ENCODE measurements at regions of chr9 and their contacts with region 1.

Region 1: DNA sequence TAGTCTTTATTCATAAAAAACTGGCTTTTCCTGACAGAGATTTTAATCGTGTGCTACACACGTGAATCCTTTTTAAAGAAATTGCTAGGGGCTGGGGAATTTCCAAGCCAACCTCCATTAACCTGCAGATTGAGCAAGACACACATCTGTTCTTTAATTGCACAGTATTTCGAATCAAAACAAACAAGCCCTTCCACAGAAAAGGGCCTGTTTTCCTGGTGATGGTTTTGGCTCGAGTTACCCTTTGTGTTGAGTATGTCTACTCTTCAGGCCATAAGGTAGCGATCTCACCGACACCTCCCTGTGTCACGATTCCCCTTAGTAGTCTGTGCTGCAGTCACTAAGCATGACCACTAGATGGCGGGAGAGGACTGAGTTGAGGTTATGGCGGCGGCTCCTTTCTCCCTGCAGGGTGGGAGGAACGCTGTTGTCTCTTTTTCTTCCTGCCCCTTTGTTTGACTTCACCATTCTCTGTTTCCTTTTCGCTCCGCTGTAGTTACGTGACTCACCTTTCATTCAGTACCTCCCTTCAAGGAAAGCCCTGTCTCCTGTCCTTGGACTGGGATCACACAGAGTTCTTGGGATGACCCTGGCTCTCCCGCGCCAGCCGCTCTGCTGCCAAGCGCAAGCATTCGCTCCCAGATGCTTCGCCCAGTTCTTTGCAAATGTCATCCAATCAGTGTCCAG is 137.1 kb upstream of the SLC24A2 start:
- DNase-seq: peak; percentile 80
- ATAC-seq: peak; percentile 94

Region 2: GRCh38 chr9:19471737-19472648 is 454.0 kb before region 1 on chr9:
- intact Hi-C with region 1: loop called (anchors 10 kb)
- DNase-seq: peak; percentile 66
- ATAC-seq: peak; percentile 75

Region 3: DNA sequence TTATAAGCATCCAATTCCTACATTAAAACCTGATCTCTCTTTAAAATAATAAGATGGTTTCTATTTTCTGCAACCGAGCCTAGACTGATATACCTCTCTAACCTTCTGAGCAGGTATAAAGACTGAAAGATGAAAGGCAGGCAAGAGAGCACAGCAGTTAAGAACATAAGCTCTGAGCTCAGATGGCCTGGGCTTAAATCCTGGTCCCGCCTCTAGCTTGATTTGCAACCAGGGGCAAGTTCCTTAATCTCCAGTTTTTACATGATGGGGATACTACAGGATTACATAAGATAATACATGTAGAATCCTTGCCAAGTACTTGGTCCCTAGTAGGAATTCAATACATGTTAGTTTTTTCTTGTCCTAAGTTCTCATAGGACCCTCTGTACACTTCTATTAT is 171.0 kb before region 1 on chr9:
- intact Hi-C with region 1: no loop called
- DNase-seq: no peak
- ATAC-seq: no peak

Measured in sciatic nerve (tissue), 2 donors.